ENCODE measurements at regions of chr1 and their contacts with region 1.

Region 1: DNA sequence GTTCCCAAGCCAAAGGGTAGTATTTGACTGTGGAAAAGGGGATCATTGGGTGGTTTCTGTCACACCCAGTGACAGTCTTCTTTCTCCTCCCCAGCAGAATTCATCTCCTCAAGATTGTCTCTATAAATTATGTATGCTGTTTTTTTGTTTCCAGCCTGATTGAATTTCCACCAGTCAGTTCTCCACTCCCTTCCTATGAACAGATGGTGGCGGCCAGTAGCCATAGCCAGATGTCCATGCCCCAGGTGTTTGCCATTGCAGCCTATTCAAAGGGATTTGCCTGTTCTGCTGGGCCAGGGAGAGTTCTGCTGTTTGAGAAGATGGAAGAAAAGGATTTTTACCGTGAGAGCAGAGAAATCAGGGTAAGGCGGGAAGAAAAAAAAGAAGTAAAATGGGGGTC is 12.9 kb downstream of the CFAP57 start:
- DNase-seq: no peak
- ATAC-seq: no peak
- H3K4me3 ChIP-seq: no peak overlapping the region
- H3K27ac ChIP-seq: no peak overlapping the region
- H3K4me1 ChIP-seq: no peaks in the 10 kb centered on the region
- H3K27me3 ChIP-seq: peaks cover 6% of the 10 kb centered on the region
- CTCF ChIP-seq: no peak
- POLR2A ChIP-seq: no peak
- RAD21 ChIP-seq: no peak

Region 2: GRCh38 chr1:42669936-42670335 is 515.1 kb before region 1 on chr1:
- CTCF ChIA-PET with region 1: no interaction called
- POLR2A ChIA-PET with region 1: interaction called, 13 read pairs
- dilution Hi-C with region 1: no loop called
- in situ Hi-C with region 1: no loop called
- intact Hi-C with region 1: no loop called
- DNase-seq: no peak
- ATAC-seq: no peak
- H3K4me3 ChIP-seq: no peak overlapping the region
- H3K27ac ChIP-seq: no peak overlapping the region
- H3K4me1 ChIP-seq: no peaks in the 10 kb centered on the region
- H3K27me3 ChIP-seq: no peaks in the 10 kb centered on the region
- CTCF ChIP-seq: no peak
- POLR2A ChIP-seq: no peak
- RAD21 ChIP-seq: no peak